ENCODE measurements at regions of chr16 and their contacts with region 1.

Region 1: DNA sequence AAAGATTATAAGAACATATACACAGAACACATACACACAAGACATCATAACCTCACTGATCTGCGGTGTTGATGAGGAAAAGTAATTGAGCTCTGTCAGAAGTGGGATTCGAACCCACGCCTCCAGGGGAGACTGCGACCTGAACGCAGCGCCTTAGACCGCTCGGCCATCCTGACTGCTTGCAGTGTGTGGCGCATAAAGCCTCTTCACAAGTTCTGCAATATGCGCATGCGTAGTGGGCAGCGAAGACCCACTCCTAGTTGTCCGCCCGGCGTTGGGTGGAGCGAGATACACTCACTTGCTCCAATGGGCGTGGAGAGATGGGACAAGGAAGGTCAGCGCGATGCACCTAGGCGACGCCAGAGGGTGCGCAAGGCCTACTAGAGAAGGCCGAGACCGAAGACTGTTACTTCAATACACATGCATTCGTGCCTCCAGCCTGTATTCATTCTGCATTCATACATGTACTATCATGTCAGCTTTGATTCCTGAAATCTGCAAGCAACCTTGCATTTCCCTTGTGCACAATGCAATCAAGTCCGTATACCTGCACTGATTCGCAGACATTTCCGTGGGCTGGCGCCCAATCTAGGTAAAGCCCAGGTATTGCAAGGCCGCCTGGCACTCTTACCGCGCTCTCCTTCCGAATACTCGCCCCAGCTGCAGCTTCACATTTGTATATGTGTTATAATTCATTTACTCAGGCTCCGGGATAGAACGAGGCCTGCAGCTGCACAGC is 16.1 kb upstream of the PLLP start:
- DNase-seq: peak; percentile 99
- ATAC-seq: peak; percentile 96
- H3K4me3 ChIP-seq: peak overlapping the region in 1 of 2 donors; percentile 18
- H3K27ac ChIP-seq: no peak overlapping the region
- H3K4me1 ChIP-seq: peaks cover 0 to 3% of the 10 kb centered on the region in 2 donors
- H3K27me3 ChIP-seq: no peaks in the 10 kb centered on the region

Region 2: DNA sequence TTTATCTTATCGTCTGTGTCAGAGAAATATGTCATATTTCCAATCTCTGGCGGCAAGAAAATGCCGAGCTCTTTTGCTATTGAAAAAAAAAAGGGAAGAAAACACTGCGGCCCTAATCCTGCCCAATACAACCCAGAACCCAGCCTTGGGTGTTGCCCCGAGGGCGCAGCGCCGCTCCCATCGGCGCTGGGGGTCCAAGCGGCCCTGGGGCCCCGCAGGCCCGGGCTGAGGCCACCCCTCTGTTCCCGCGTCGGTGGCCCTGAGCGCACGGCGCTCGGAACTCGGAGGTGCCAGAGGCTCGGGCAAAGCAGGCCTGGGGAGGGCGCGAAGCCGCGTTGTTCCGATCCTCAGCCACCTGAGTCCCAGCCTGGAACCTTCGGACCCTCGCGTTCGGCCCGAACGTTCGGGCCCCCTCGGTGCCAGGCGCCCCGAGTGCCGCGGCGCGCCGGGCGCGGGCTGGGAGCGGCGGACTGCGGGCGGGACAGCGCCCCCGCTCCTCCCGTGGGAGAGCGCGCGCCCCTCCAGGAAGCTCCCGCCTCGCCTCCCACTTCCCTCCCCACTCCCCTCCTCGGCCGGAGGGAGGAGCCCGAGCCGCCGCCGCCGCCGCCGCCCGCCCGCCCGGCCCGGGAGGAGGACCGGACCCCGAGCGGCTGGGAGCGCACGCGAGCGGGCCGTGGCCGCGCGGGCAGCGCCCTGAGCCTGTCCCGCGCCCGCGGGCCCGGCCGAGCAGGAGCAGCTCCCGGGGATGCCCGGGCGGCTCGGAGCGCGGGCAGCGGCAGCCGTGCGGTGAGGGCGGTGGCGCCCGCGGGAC is 208.4 kb before region 1 on chr16 and contains the start of gene CPNE2:
- intact Hi-C with region 1: loop called (anchors 5 to 10 kb)
- DNase-seq: peak; percentile 80 to 91
- ATAC-seq: peak; percentile 83
- H3K4me3 ChIP-seq: peak within 1 kb of the TSS; percentile 80 to 93
- H3K27ac ChIP-seq: peak within 1 kb of the TSS in 1 of 2 donors; percentile 31
- H3K4me1 ChIP-seq: no peaks in the 10 kb centered on the region
- H3K27me3 ChIP-seq: no peaks in the 10 kb centered on the region
- total RNA-seq, gene CPNE2: 29.4 to 37.1 TPM

Region 3: GRCh38 chr16:57231821-57232350 is 68.7 kb before region 1 on chr16:
- intact Hi-C with region 1: no loop called
- DNase-seq: no peak
- ATAC-seq: no peak
- H3K4me3 ChIP-seq: no peak overlapping the region
- H3K27ac ChIP-seq: no peak overlapping the region
- H3K4me1 ChIP-seq: no peaks in the 10 kb centered on the region
- H3K27me3 ChIP-seq: no peaks in the 10 kb centered on the region

Region 4: GRCh38 chr16:57244767-57245471 is 55.6 kb before region 1 on chr16 and contains the start of gene ARL2BP:
- intact Hi-C with region 1: loop called (anchors 1 to 2 kb)
- DNase-seq: peak; percentile 99
- ATAC-seq: peak; percentile 99
- H3K4me3 ChIP-seq: peak within 1 kb of the TSS; percentile 55 to 97
- H3K27ac ChIP-seq: peak within 1 kb of the TSS; percentile 78 to 85
- H3K4me1 ChIP-seq: no peaks in the 10 kb centered on the region
- H3K27me3 ChIP-seq: no peaks in the 10 kb centered on the region
- total RNA-seq, gene ARL2BP: 39.1 to 47.5 TPM

Region 5: GRCh38 chr16:57422026-57422944 is 121.7 kb after region 1 on chr16:
- intact Hi-C with region 1: loop called (anchors 1 kb)
- DNase-seq: peak; percentile 64 to 86
- ATAC-seq: peak; percentile 60
- H3K4me3 ChIP-seq: no peak overlapping the region
- H3K27ac ChIP-seq: no peak overlapping the region
- H3K4me1 ChIP-seq: no peaks in the 10 kb centered on the region
- H3K27me3 ChIP-seq: no peaks in the 10 kb centered on the region

Measured in aorta (tissue), 5 donors.